Left ventricle myocardium superior (tissue), 1 donor: ENCODE measurements at regions of chr17 and their contacts with region 1.

Region 1: GRCh38 chr17:2244545-2245525 is 58.8 kb downstream of the SMG6 start:
- DNase-seq: peak; percentile 92
- ATAC-seq: peak; percentile 89

Region 2: GRCh38 chr17:2054512-2055291 is 190.1 kb before region 1 on chr17 and contains the start of gene HIC1:
- intact Hi-C with region 1: loop called (anchors 5 kb)
- DNase-seq: peak; percentile 91
- ATAC-seq: peak; percentile 65
- total RNA-seq, gene HIC1: 19.0 TPM

Region 3: DNA sequence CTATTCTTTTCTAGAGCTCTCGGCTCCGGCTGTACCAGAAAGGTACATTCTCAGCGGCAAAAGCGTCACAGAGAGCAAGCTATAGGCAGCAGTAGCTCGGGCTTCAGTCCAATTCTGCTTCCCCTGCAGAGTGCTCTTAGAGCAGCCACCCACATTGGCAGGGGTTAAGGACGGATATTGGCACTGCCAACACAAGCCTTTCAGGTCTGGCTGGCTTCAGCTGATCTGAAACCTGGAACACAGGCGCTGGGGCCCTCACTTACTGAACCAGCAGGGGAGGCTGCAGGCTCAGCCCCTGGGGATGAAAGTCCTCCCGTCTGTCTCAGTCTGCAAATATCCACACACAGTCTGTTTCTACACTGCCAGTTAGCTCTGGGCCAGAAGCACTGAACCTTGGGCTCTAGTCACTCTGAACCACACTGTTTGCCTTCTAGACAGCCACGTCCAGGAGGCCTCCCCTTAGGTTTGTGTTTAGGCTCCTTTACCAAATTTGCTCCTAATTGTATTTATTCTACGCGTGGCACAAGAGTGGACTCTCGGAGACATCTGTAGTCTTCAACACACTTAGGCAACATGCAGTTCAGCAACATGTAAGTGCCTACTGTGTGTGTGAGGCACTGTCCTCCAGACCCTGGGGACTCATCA is 149.8 kb before region 1 on chr17:
- intact Hi-C with region 1: loop called (anchors 10 kb)
- DNase-seq: peak; percentile 86
- ATAC-seq: peak; percentile 92